ENCODE measurements at regions of chr5 and their contacts with region 1.

Region 1: DNA sequence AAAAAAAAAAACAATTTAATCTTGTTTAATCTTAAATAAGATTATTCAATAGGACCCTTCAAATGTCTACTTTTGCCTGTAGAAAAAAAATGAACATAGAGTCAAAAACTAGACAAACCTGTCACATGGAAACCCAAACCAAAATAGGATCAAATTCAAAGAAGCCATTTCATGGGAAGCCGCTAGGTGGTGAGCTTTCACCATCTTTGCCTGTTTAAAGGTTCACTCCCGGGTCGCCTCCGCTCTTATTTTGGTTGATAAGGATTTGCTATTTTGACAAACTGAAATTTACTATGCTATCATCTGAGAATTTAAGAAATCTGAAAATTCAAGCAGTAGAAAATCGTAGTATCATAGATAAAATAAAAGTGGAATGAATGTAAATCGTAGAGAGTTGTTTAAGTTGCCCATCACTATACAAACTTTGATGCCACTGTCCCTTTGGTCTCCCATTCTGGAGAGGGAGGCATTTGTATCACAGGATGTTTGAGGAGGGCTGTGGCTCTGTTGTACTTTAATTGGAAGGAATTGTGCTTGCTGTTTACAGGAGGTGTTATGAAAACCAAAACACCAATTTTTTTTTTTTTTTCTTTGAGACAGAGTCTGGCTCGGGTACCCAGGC is 43.5 kb upstream of the DNAH5 start:
- DNase-seq: peak; percentile 58
- CTCF ChIP-seq: peak; percentile 76

Region 2: GRCh38 chr5:13625616-13626198 is 362.2 kb before region 1 on chr5:
- in situ Hi-C with region 1: no loop called
- DNase-seq: no peak
- CTCF ChIP-seq: no peak

Region 3: DNA sequence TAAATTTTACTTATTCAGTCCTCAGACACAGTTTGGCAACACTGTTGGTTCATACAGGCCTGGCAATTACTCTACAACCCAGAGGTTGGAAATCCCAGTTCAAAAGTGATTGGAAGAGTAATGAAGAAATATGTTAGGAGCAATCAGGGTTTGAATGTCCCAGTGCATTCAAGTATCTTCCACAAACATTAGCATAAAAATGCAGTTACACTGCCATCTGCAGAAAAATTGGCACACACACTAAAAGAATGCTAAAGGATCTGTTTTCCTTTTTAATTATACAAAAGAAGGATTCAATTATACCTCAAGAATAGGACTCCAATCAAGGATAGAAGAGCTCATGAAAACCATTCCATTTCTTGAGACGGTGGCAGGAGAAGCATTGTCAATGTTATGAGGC is 173.7 kb before region 1 on chr5:
- in situ Hi-C with region 1: no loop called
- DNase-seq: no peak
- CTCF ChIP-seq: no peak

Region 4: DNA sequence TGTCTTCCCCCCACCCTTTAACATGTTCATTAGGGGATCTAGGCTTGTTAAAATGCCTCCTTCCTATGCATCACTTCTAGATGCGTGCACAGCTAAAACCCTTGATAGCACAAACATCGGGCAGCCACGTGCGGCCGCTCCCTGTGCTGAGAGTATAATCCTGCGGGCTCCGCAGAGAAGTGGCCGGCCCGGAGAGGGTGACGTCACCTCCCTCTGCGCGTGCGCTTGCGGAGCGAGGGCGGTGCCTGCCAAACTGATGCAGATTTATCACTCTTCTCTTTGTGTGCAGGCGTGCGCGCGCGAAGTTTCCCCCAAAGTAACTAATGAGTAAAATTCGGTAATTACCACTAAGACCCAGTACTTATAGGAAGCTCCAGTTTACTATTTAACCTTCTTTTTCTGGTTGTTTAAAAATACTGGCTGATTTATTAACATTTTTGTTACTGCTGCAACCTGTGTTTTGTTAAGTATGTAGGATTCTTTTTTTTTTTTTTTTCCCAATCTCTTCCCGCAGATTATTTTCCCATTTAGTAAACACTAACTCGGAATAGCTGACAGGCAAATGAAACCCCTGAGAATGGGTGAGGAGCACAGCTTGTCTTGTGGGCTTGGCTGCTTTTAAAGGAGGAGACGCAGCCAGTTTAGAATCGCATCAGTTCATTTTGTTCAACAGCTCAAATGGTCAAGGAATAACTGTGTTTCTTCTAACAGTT is 276.8 kb after region 1 on chr5:
- in situ Hi-C with region 1: loop called (anchors 25 kb)
- DNase-seq: peak; percentile 76
- CTCF ChIP-seq: no peak

Region 5: DNA sequence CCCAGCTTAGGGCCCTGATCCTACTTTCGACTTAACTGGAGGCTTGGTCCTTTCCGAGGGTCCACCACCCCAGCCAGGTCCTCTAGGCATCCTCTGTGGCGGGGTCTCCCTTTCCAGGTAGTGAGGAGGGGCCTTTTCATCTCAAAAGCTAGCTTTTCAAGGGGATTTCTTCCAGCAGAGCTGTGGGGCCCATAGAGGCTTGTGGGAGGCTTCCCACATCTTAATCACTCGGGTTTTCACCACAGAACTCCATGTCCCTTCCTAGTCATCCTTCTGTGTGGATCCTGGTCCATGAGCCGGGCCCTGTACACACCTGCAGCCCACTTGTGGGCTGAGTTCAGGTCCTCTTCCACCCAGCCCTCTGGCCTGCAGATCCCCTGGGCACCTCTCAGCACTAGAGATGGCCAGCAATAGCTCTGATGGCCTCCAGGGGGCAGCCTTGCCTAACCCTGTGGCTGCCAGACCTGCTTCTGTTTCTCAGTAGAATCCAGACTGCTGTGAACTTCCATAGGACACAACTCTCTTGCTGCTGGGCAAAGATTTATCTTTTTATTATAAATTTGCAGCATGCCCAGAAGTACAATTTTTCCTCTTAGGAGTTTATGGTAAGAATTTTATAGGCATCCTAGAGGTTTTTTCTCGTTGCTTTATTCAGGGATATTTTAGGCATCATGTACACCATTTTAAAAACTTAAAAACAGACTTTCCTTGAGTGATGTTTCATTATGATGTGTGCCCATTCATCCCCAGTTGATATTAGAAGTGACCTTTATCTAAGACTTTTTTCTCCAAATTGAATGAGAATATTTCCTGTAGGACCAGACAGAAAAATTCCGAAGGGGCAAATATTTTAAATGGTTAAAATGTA is 364.1 kb after region 1 on chr5:
- in situ Hi-C with region 1: loop called (anchors 10 kb)
- DNase-seq: peak; percentile 78
- CTCF ChIP-seq: peak; percentile 96

Region 6: DNA sequence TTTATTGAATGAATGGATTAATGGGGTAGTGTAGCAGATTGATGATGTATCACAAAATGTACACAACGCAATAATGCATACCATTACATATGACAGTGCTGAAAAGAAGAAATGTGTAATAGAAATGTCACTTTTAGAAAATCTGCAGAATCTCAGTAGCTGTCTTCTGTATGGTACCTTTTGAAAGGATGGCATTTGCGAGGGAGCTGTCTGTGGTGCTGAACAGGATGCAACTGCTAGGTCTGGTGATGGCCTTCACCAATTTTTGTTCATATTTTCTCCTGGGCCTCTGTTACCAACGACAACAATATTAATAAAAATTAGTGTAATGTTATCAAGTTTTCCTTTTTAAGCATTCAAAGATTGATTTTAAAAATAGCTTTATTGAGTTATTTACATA is 640.4 kb after region 1 on chr5:
- in situ Hi-C with region 1: loop called (anchors 25 kb)
- DNase-seq: peak; percentile 36
- CTCF ChIP-seq: no peak

Measured in GM13977 (cell line).